ENCODE measurements at regions of chr16 and their contacts with region 1.

Region 1: GRCh38 chr16:29848420-29849297 is 14.4 kb downstream of the CDIPT start:
- DNase-seq: peak; percentile 65
- ATAC-seq: peak; percentile 90
- H3K4me3 ChIP-seq: no peak overlapping the region
- H3K27ac ChIP-seq: no peak overlapping the region
- H3K4me1 ChIP-seq: no peaks in the 10 kb centered on the region
- H3K27me3 ChIP-seq: no peaks in the 10 kb centered on the region
- CTCF ChIP-seq: peak; percentile 99
- EP300 ChIP-seq: no peak
- POLR2A ChIP-seq: no peak
- RAD21 ChIP-seq: peak; percentile 98

Region 2: DNA sequence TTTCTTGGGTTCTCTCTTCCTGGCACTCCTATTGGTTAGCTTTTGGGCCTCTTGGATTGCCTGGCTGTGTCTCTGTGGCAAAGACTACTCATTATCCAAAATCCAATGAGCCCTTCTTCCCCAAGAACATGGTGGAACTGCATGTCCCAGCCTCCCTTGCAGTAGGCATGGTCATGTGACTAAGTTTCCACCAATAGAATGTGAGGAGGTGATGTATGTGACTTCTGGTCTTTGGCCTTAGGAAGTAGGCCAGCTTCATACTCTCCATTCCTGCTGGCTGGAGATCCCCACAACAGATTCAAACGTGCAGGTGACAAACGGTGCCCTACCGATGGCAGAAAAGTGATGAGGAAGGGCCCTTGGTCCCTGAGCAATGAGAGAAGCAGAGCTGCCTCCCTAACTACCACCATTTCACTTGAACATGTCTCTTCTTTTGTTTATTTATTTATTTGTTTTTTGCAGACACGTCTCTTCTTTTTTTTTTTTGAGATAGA is 202.9 kb before region 1 on chr16:
- CTCF ChIA-PET with region 1: no interaction called
- POLR2A ChIA-PET with region 1: no interaction called
- in situ Hi-C with region 1: no loop called
- intact Hi-C with region 1: no loop called
- DNase-seq: peak; percentile 89
- ATAC-seq: peak; percentile 87
- H3K4me3 ChIP-seq: peak overlapping the region in 1 of 3 experiments; percentile 14; a peak in 2 of 6 replicates
- H3K27ac ChIP-seq: peak overlapping the region; percentile 43
- H3K4me1 ChIP-seq: peaks cover 47% of the 10 kb centered on the region
- H3K27me3 ChIP-seq: no peaks in the 10 kb centered on the region; a peak in 1 of 5 replicates
- CTCF ChIP-seq: no peak
- EP300 ChIP-seq: no peak
- POLR2A ChIP-seq: peak; percentile 73 to 77
- RAD21 ChIP-seq: no peak

Region 3: GRCh38 chr16:29710227-29711219 is 138.1 kb before region 1 on chr16:
- CTCF ChIA-PET with region 1: no interaction called
- POLR2A ChIA-PET with region 1: no interaction called
- in situ Hi-C with region 1: no loop called
- intact Hi-C with region 1: no loop called
- DNase-seq: peak; percentile 75
- ATAC-seq: peak; percentile 94
- H3K4me3 ChIP-seq: no peak overlapping the region
- H3K27ac ChIP-seq: no peak overlapping the region
- H3K4me1 ChIP-seq: peaks cover 32% of the 10 kb centered on the region
- H3K27me3 ChIP-seq: peaks cover 0 to 3% of the 10 kb centered on the region in 2 experiments; a peak in 1 of 5 replicates
- CTCF ChIP-seq: peak; percentile 81
- EP300 ChIP-seq: no peak
- POLR2A ChIP-seq: no peak
- RAD21 ChIP-seq: peak; percentile 44

Region 4: DNA sequence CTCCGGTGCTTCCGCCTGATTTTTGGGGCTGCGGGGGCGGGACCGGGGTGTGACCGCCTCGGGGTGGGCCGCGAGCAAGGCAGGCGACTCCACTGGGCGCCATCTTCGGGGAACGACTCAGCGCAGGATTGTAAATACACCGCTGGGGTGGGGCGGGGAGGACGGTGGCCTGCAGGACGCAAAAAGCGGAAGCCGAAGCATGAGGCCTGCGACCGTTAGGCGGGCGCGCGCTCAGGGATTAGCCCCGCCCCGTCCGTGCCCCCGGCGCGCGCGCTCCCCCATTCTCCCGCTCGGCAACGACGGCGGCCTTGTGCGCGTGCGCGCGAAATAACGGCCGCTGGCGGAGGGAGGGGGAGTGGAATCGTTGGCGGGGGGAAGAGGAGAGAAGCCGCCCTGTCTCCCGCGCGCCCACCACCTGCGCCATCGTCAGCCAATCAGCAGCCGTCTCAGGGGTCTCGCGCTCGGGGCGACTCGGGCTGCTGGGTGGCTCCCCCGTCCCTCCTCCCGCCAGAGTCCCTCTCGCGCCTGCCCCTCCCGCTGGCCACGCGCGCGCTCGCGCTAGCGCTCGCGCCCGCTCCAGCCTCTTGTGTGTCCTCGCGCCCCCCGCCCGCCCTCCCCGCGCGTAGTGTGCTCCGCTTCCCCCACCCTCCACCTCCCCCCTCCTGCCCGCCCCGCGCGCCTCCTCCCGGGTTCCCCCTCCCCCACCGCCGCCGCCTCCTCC is 43.1 kb before region 1 on chr16:
- CTCF ChIA-PET with region 1: interaction called, 5 read pairs
- POLR2A ChIA-PET with region 1: interaction called, 37 read pairs
- in situ Hi-C with region 1: no loop called
- intact Hi-C with region 1: no loop called
- DNase-seq: peak; percentile 97
- ATAC-seq: peak; percentile 78
- H3K4me3 ChIP-seq: peak overlapping the region; percentile 59 to 85 (median 77)
- H3K27ac ChIP-seq: peak overlapping the region; percentile 88
- H3K4me1 ChIP-seq: peaks cover 50% of the 10 kb centered on the region
- H3K27me3 ChIP-seq: no peaks in the 10 kb centered on the region
- CTCF ChIP-seq: peak; percentile 36
- EP300 ChIP-seq: peak in 1 of 2 experiments; percentile 64; a peak in 1 of 4 replicates
- POLR2A ChIP-seq: peak in 1 of 2 experiments; percentile 82; a peak in 2 of 4 replicates
- RAD21 ChIP-seq: peak; percentile 66